Sigmoid colon (tissue), 7 donors: ENCODE measurements at regions of chr5 and their contacts with region 1.

Region 1: GRCh38 chr5:56064984-56065383 is 70.2 kb upstream of the IL6ST start:
- DNase-seq: no peak
- H3K4me3 ChIP-seq: no peak overlapping the region
- H3K27ac ChIP-seq: no peak overlapping the region
- H3K4me1 ChIP-seq: no peaks in the 10 kb centered on the region
- H3K27me3 ChIP-seq: no peaks in the 10 kb centered on the region
- CTCF ChIP-seq: no peak
- EP300 ChIP-seq: no peak
- POLR2A ChIP-seq: no peak

Region 2: GRCh38 chr5:56827049-56827448 is 762.1 kb after region 1 on chr5:
- intact Hi-C with region 1: loop called (anchors 10 kb)
- DNase-seq: no peak
- H3K4me3 ChIP-seq: no peak overlapping the region
- H3K27ac ChIP-seq: no peak overlapping the region
- H3K4me1 ChIP-seq: peaks cover 0 to 21% (median 8%) of the 10 kb centered on the region in 4 donors
- H3K27me3 ChIP-seq: no peaks in the 10 kb centered on the region
- CTCF ChIP-seq: no peak
- EP300 ChIP-seq: no peak
- POLR2A ChIP-seq: no peak